K562 (cell line): ENCODE measurements at regions of chr12 and their contacts with region 1.

Region 1: GRCh38 chr12:6965026-6965661 is 5.3 kb downstream of the PHB2 start:
- DNase-seq: peak; percentile 52 to 91 (median 67)
- ATAC-seq: peak; percentile 76
- H3K4me3 ChIP-seq: no peak overlapping the region
- H3K27ac ChIP-seq: peak overlapping the region; percentile 83
- H3K4me1 ChIP-seq: peaks cover 57 to 72% of the 10 kb centered on the region in 2 experiments
- H3K27me3 ChIP-seq: no peaks in the 10 kb centered on the region
- CTCF ChIP-seq: peak; percentile 83 to 86 (median 84)
- EP300 ChIP-seq: no peak
- POLR2A ChIP-seq: peak; percentile 50
- RAD21 ChIP-seq: peak; percentile 62 to 65

Region 2: DNA sequence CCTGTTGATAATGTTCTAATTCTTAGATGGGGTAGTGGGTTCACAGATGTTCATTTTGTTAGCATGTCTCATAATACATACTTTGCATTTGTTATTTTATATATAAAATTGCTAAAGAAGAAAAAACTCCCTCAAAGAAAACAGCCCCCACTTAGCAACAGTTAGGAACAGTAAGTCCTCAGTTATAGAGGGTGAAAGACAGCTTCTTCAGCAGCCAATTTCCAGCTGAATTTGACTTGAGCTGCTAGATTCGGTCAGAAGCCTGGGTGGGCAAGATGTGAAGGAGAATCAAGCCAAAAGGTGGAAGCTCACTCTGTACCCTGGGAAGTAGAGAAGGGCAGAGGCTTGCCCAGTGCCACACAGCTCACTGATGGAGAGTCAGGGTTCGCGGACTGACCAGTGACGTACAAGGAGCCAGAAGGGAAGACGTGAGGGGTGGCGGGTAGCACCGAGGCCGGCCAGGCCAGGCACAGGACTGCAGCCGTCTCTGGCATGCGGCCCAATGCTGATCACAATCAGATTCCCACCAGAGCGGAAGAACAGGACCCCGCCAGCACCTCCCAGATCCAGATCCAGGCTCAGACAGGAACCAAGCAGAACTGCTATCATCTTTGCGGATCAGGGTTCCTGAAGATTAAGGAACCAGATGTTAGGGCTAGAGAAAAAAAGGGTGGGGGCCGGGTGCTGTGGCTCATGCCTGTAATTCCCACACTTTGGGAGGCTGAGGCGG is 810.2 kb before region 1 on chr12:
- CTCF ChIA-PET with region 1: no interaction called
- POLR2A ChIA-PET with region 1: no interaction called
- in situ Hi-C with region 1: no loop called
- intact Hi-C with region 1: no loop called
- DNase-seq: peak in 1 of 4 experiments; percentile 9
- ATAC-seq: no peak
- H3K4me3 ChIP-seq: no peak overlapping the region
- H3K27ac ChIP-seq: no peak overlapping the region
- H3K4me1 ChIP-seq: peaks cover 0 to 16% of the 10 kb centered on the region in 2 experiments; a peak in 3 of 5 replicates
- H3K27me3 ChIP-seq: no peaks in the 10 kb centered on the region
- CTCF ChIP-seq: no peak
- EP300 ChIP-seq: no peak
- POLR2A ChIP-seq: no peak
- RAD21 ChIP-seq: no peak

Region 3: GRCh38 chr12:6867413-6868210 is 97.5 kb before region 1 on chr12 and contains the start of gene TPI1:
- CTCF ChIA-PET with region 1: interaction called, 5 read pairs
- POLR2A ChIA-PET with region 1: interaction called, 22 read pairs
- in situ Hi-C with region 1: no loop called
- intact Hi-C with region 1: no loop called
- DNase-seq: peak; percentile 78 to 91 (median 81)
- ATAC-seq: peak; percentile 83
- H3K4me3 ChIP-seq: peak within 1 kb of the TSS; percentile 96
- H3K27ac ChIP-seq: peak within 1 kb of the TSS; percentile 94
- H3K4me1 ChIP-seq: peaks cover 33 to 53% of the 10 kb centered on the region in 2 experiments; a peak in 4 of 5 replicates
- H3K27me3 ChIP-seq: no peaks in the 10 kb centered on the region
- CTCF ChIP-seq: 0 out of 6 replicates have a peak, but pooled peaks of 1 of the 3 experiments have one; percentile 3
- EP300 ChIP-seq: no peak
- POLR2A ChIP-seq: peak; percentile 99
- RAD21 ChIP-seq: no peak
- polyA plus RNA-seq, gene TPI1: 4,965 to 4,971 TPM

Region 4: GRCh38 chr12:6873094-6874014 is 91.8 kb before region 1 on chr12 and contains the start of gene SPSB2:
- CTCF ChIA-PET with region 1: interaction called, 5 read pairs
- POLR2A ChIA-PET with region 1: interaction called, 22 read pairs
- in situ Hi-C with region 1: no loop called
- intact Hi-C with region 1: no loop called
- DNase-seq: peak; percentile 89 to 96 (median 92)
- ATAC-seq: peak; percentile 88
- H3K4me3 ChIP-seq: peak within 1 kb of the TSS; percentile 73
- H3K27ac ChIP-seq: peak within 1 kb of the TSS; percentile 78
- H3K4me1 ChIP-seq: peaks cover 29 to 44% of the 10 kb centered on the region in 2 experiments; a peak in 4 of 5 replicates
- H3K27me3 ChIP-seq: no peaks in the 10 kb centered on the region
- CTCF ChIP-seq: no peak
- EP300 ChIP-seq: no peak
- POLR2A ChIP-seq: peak; percentile 75
- RAD21 ChIP-seq: no peak
- polyA plus RNA-seq, gene SPSB2: 0.10 to 0.29 TPM

Region 5: GRCh38 chr12:6927379-6928024 is 37.6 kb before region 1 on chr12 and contains the start of gene ATN1:
- CTCF ChIA-PET with region 1: interaction called, 6 read pairs
- POLR2A ChIA-PET with region 1: interaction called, 4 read pairs
- in situ Hi-C with region 1: no loop called
- intact Hi-C with region 1: loop called (anchors 1 kb)
- DNase-seq: peak; percentile 70 to 78 (median 74)
- ATAC-seq: peak; percentile 47
- H3K4me3 ChIP-seq: peak within 1 kb of the TSS; percentile 76
- H3K27ac ChIP-seq: peak within 1 kb of the TSS; percentile 85
- H3K4me1 ChIP-seq: peaks cover 41 to 42% of the 10 kb centered on the region in 2 experiments; a peak in 4 of 5 replicates
- H3K27me3 ChIP-seq: no peaks in the 10 kb centered on the region
- CTCF ChIP-seq: no peak
- EP300 ChIP-seq: no peak
- POLR2A ChIP-seq: peak; percentile 69
- RAD21 ChIP-seq: no peak
- polyA plus RNA-seq, gene ATN1: 0.15 to 0.20 TPM

Region 6: DNA sequence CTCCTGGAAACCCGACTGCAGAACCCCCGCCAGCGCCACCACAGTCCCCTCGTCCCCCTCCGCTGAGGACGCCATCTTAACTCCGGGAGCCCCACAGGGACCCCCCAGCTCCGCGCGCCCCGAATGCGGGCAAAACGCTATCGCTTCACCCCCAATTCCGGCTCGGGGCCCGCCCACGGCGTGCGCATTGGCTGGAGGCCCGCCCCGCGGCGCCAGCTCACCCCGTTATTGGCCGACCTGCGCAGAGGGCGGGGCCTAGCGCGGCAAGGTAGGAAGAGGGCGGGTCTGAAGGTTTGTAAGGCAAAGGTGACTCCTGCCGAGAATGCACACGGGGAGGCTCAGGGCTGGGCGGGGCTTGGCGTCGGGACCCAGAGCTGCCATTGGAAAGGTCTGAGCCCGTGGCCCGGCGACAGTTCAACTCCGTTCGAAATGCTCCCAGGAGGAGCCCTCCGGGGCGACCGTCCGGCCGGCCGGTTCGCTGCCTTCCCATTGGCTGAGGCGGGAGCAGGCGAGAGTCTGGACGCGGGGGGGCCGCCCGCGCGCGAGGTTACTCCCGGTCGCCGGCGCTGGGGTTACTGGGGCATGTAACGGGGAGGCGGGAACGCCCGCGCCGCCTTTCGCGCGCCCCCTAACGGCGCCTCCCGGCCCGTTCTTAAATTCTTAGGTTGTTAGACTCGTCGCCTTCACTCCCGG is 53.4 kb after region 1 on chr12 and contains the start of gene LPCAT3:
- CTCF ChIA-PET with region 1: interaction called, 3 read pairs
- POLR2A ChIA-PET with region 1: interaction called, 5 read pairs
- in situ Hi-C with region 1: no loop called
- intact Hi-C with region 1: loop called (anchors 5 kb)
- DNase-seq: peak; percentile 91 to 95 (median 92)
- ATAC-seq: peak; percentile 97
- H3K4me3 ChIP-seq: peak within 1 kb of the TSS; percentile 85
- H3K27ac ChIP-seq: peak within 1 kb of the TSS; percentile 84
- H3K4me1 ChIP-seq: peaks cover 5 to 24% of the 10 kb centered on the region in 2 experiments; a peak in 4 of 5 replicates
- H3K27me3 ChIP-seq: no peaks in the 10 kb centered on the region
- CTCF ChIP-seq: peak; percentile 78 to 85 (median 82)
- EP300 ChIP-seq: peak; percentile 41
- POLR2A ChIP-seq: peak; percentile 66
- RAD21 ChIP-seq: peak; percentile 57 to 66
- polyA plus RNA-seq, gene LPCAT3: 4.9 to 5.6 TPM

Region 7: DNA sequence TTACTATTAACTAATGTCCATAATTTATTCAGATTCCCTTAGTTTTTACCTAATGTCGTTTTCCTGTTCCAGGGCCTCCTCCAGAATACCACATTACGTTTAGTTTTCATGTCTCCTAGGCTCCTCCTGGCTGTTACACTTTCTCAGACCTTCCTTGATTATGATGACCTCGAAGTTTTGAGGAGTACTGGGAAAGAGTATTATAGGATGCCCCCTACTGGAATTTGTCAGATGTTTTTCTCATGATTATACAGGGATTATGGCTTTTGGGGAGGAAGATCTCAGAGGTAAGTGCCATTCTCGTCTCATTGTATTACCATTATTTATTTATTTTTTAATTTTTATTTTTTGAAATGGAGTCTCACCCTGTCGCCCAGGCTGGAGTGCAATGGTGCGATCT is 77.7 kb after region 1 on chr12:
- CTCF ChIA-PET with region 1: no interaction called
- POLR2A ChIA-PET with region 1: interaction called, 5 read pairs
- in situ Hi-C with region 1: no loop called
- intact Hi-C with region 1: loop called (anchors 5 kb)
- DNase-seq: peak; percentile 22 to 64 (median 40)
- ATAC-seq: peak; percentile 87
- H3K4me3 ChIP-seq: no peak overlapping the region
- H3K27ac ChIP-seq: no peak overlapping the region
- H3K4me1 ChIP-seq: no peaks in the 10 kb centered on the region; a peak in 1 of 5 replicates
- H3K27me3 ChIP-seq: no peaks in the 10 kb centered on the region
- CTCF ChIP-seq: peak; percentile 54 to 75 (median 59); a peak in 5 of 6 replicates
- EP300 ChIP-seq: no peak
- POLR2A ChIP-seq: no peak
- RAD21 ChIP-seq: peak; percentile 72 to 77

Region 8: GRCh38 chr12:7188562-7189397 is 223.6 kb after region 1 on chr12:
- CTCF ChIA-PET with region 1: no interaction called
- POLR2A ChIA-PET with region 1: no interaction called
- in situ Hi-C with region 1: no loop called
- intact Hi-C with region 1: loop called (anchors 10 kb)
- DNase-seq: peak; percentile 44 to 71 (median 50)
- ATAC-seq: peak; percentile 78
- H3K4me3 ChIP-seq: peak overlapping the region; percentile 69
- H3K27ac ChIP-seq: peak overlapping the region; percentile 82
- H3K4me1 ChIP-seq: peaks cover 8 to 17% of the 10 kb centered on the region in 2 experiments; a peak in 4 of 5 replicates
- H3K27me3 ChIP-seq: no peaks in the 10 kb centered on the region
- CTCF ChIP-seq: peak; percentile 69 to 80 (median 76)
- EP300 ChIP-seq: no peak
- POLR2A ChIP-seq: no peak
- RAD21 ChIP-seq: peak; percentile 23 to 64; a peak in 3 of 4 replicates